ENCODE measurements at regions of chr1 and their contacts with region 1.

Region 1: DNA sequence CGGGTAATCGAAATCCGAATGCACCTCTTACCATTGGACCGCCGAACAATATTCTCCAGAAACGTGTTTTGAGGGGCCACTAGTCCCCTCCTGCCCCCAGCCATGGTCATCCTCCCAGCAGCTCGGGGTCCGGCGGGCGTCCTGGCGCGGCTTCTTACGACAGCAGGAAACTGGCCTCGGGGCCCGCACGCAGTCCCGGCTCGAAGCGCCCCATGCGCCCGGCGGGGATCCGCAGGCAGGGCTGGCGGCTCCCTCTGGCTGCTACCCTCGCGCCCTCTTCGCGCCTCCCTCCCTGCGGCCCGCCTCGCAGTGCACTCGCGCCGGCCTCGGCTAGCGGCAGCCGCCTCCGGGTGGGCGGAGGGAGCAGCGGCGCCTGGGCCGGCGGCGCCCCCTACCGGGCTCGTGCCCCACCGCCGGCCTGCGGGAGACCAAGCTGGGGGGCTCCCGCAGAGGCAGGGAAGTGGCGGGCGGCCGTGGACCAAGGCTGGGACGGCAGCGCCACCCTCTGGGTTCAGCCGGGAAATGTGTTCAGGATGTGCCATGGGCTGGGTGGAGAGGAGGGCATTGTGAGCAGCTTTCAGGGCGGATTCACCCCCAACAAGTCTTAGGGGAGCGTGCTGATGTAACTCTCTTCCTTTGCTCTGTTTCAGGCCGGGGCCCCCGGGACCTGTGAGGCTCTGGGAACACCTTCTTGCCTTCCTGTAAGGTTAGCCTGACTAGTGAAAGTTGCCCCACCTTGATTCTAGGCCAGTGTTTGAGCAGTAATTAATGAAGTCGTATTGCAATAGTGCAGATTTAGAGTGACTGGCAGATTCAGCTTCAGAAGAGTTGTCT is at the start of gene KCNH1:
- DNase-seq: peak; percentile 79
- H3K4me3 Mint-ChIP-seq: peak within 1 kb of the TSS; percentile 54
- H3K27ac Mint-ChIP-seq: no peak within 1 kb of the TSS
- H3K4me1 Mint-ChIP-seq: peaks cover 8% of the 10 kb centered on the region
- H3K27me3 Mint-ChIP-seq: peaks cover 41% of the 10 kb centered on the region

Region 2: DNA sequence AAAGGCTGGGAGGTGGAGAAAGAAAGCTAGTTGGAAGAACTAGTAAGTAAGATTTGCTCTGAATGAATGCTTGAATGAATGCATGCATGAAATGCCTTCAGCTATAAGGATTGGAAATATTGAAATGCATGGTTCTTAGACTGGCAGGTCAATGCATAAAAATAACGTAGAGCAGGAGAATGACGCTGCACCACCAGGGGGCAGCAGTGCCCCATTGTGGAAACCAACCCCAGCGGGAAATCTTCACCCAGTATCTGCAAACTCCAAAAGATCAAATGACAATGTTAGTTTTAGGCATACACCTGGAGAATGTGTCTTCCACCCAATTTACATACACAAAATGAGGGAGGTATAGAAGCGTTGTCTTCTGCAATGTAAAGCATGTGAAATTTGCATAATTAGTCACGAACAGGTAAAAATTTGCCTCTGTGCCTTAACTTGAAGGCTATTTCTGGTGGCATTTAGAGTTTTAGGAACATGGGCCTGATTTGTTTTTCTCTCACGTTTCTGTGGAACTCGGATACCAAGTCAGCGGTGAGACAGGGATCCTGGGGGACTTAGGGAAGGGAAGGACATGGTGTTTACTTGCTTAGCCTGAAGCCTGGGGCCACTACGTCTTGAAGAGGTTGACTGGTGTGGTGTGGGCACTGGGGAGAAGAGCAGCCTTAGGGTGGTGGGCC is 726.7 kb before region 1 on chr1:
- CTCF ChIA-PET with region 1: interaction called, 14 read pairs
- DNase-seq: peak; percentile 80
- H3K4me3 Mint-ChIP-seq: no peak overlapping the region
- H3K27ac Mint-ChIP-seq: no peak overlapping the region
- H3K4me1 Mint-ChIP-seq: no peaks in the 10 kb centered on the region
- H3K27me3 Mint-ChIP-seq: no peaks in the 10 kb centered on the region

Region 3: DNA sequence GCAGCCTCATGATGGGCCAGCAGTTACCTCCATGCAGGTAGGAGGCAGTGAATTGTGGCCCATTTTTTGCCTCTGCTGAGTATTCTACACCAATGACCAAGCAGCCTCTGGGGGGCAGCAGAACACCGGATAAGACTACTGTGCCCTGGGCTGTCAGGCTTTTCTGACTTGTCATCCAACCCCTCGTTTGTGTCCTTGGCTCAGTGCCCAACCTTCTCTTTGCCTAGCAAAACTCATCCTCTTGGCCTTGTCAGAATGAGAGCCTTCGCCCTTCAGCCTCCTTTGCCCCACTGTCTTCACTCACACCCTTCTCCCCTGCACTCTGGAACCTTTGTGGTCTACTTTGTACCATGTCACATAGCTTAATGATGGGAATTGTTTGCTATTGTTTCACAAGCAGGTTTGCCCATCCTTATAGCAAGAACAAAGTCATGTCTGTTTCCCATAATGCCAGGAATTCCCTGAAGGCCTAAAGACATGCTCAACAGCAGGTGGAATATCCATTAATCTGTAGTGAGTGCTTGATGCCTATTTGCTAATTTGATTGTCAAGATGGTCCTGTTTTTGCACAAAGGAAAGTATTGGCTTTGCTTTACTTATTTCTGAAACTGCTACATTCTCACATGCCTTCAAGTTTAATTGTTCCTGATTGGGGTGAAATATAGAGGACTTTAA is 549.5 kb before region 1 on chr1:
- CTCF ChIA-PET with region 1: interaction called, 19 read pairs
- DNase-seq: peak; percentile 81
- H3K4me3 Mint-ChIP-seq: no peak overlapping the region
- H3K27ac Mint-ChIP-seq: no peak overlapping the region
- H3K4me1 Mint-ChIP-seq: peaks cover 6% of the 10 kb centered on the region
- H3K27me3 Mint-ChIP-seq: peaks cover 1% of the 10 kb centered on the region

Region 4: GRCh38 chr1:211153932-211154331 is 19.9 kb after region 1 on chr1:
- CTCF ChIA-PET with region 1: no interaction called
- DNase-seq: no peak
- H3K4me3 Mint-ChIP-seq: no peak overlapping the region
- H3K27ac Mint-ChIP-seq: no peak overlapping the region
- H3K4me1 Mint-ChIP-seq: peaks cover 5% of the 10 kb centered on the region
- H3K27me3 Mint-ChIP-seq: no peaks in the 10 kb centered on the region

Region 5: DNA sequence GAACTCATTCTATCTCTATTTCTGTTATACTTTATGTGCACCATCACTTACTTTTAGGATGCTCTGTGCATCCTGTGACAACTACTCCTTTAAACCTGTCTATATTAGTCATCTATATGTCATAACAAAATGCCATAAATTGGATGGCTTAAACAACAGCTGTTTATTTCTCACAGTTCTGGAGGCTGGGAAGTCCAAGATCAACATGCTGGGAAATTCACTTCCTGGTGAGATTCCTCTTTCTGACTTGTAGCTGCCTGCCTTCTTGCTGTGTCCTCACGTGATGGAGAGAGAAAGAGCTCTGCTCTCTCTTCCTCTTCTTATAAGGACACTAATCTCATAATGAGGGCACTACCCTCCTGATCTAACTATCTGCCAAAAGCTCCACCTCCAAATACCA is 62.8 kb after region 1 on chr1:
- CTCF ChIA-PET with region 1: no interaction called
- DNase-seq: no peak
- H3K4me3 Mint-ChIP-seq: no peak overlapping the region
- H3K27ac Mint-ChIP-seq: no peak overlapping the region
- H3K4me1 Mint-ChIP-seq: no peaks in the 10 kb centered on the region
- H3K27me3 Mint-ChIP-seq: peaks cover 8% of the 10 kb centered on the region